PC-9 (cell line): ENCODE measurements at regions of chr10 and their contacts with region 1.

Region 1: DNA sequence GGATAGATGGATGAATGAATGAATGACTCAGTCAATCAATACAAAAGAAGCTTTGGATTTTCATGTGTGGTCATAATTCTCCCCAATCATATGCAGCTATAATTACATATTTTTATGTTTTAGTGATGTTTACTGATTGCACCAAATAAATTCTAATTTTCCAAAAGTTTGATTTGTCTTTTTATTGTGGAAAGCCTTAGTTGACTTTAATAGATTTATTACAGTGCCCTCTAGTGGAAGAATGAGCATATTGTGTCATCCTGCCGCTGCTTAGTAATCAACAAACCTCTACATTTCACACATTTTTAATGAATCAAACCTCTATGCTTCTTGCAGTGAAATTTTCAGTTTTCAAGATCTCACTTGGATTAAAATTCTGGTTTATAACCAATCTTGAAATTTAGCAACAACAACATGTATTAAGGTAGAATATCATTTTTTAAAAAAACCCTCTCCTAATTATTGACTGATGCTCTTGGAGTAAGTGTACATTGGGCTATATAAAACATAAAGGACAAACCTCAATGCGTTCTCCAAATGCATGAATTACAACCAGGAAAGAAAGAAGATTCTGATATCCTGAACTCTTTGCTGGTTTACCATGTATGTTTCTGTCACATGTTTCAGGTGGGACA is 55.6 kb upstream of the PNLIP start:
- DNase-seq: no peak
- H3K4me3 ChIP-seq: no peak overlapping the region
- H3K27ac ChIP-seq: no peak overlapping the region
- H3K4me1 ChIP-seq: no peaks in the 10 kb centered on the region
- H3K27me3 ChIP-seq: 0 out of 2 replicates have a peak, but pooled peaks cover 3% of the 10 kb centered on the region
- CTCF ChIP-seq: peak; percentile 69

Region 2: GRCh38 chr10:115355162-115355760 is 1134.9 kb before region 1 on chr10:
- CTCF ChIA-PET with region 1: no interaction called
- POLR2A ChIA-PET with region 1: no interaction called
- intact Hi-C with region 1: loop called (anchors 2 kb)
- DNase-seq: peak in 1 of 2 experiments; percentile 20
- H3K4me3 ChIP-seq: no peak overlapping the region
- H3K27ac ChIP-seq: no peak overlapping the region
- H3K4me1 ChIP-seq: no peaks in the 10 kb centered on the region
- H3K27me3 ChIP-seq: no peaks in the 10 kb centered on the region
- CTCF ChIP-seq: peak; percentile 73

Region 3: GRCh38 chr10:116783011-116783655 is 293.0 kb after region 1 on chr10:
- CTCF ChIA-PET with region 1: no interaction called
- POLR2A ChIA-PET with region 1: no interaction called
- intact Hi-C with region 1: no loop called
- DNase-seq: no peak
- H3K4me3 ChIP-seq: no peak overlapping the region
- H3K27ac ChIP-seq: no peak overlapping the region
- H3K4me1 ChIP-seq: 0 out of 2 replicates have a peak, but pooled peaks cover 9% of the 10 kb centered on the region
- H3K27me3 ChIP-seq: no peaks in the 10 kb centered on the region
- CTCF ChIP-seq: no peak